ENCODE measurements at regions of chr3 and their contacts with region 1.

Region 1: GRCh38 chr3:150681057-150681456 is 22.7 kb downstream of the ERICH6 start:
- DNase-seq: no peak
- ATAC-seq: no peak
- H3K4me3 ChIP-seq: no peak overlapping the region
- H3K27ac ChIP-seq: no peak overlapping the region
- H3K4me1 ChIP-seq: no peaks in the 10 kb centered on the region
- H3K27me3 ChIP-seq: no peaks in the 10 kb centered on the region; the same call in 1 of the 2 replicates
- CTCF ChIP-seq: no peak

Region 2: DNA sequence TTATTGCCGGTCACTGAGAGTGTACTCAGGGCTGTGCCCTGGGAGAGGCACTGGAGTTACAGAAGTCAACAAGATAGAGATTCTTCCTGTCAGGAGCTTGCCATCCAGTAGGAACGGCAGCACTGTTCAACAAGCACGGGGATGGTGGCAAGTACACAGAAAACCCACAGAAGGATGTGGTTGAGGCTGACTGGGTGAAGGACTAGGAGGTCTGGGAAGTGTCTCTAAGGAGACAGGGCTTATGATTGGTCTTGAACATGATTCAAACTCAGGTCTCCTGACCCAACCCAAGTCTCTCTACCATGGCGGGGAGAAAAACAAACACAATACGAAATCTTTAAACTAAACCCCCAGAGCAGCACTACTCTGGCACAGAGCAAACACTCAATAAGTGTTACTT is 14.9 kb before region 1 on chr3:
- CTCF ChIA-PET with region 1: interaction called, 10 read pairs
- POLR2A ChIA-PET with region 1: no interaction called
- in situ Hi-C with region 1: no loop called
- intact Hi-C with region 1: no loop called
- DNase-seq: no peak
- ATAC-seq: no peak
- H3K4me3 ChIP-seq: no peak overlapping the region
- H3K27ac ChIP-seq: no peak overlapping the region
- H3K4me1 ChIP-seq: no peaks in the 10 kb centered on the region
- H3K27me3 ChIP-seq: peaks cover 12% of the 10 kb centered on the region; the same call in 1 of the 2 replicates
- CTCF ChIP-seq: no peak

Region 3: DNA sequence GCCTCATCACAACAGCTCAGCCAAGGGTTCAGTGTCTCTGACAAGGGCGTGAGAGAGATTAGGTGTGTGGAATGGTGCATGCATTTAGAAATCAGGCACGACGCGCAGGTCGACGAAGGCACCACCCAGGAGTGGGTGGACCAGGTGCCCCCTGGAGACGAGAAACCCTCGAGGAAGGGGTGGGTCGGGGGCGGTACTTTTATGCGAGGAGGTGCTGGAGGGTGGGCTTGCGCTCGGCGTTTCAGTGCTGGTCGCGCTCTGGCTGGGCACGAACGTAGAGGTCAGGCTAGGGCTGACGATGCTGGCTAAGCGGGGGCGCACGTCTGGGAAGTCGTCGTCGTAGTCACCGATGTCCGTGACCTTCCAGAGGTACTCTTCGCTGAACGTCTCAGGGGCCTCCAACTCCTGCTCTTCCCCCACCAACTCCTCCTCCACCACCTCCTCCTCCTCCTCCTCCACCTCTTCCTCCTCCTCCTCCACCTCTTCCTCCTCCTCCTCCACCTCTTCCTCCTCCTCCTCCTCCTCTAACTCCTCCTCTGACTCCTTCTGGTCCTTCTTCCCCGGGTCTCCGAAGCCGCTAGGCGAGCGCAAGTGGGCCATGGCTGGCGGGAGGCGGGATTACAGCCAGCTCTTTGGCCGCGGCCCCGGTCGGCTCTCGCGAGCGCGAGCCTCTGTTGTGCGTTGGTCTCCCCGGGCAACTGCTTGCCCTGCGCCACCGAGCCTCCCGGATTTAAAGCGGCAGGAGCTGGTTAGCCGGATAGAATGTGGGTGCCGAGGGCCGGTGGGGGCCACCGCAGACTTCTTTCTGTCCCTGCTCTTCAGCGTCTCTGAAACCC is 22.5 kb after region 1 on chr3 and contains the start of gene ERICH6:
- CTCF ChIA-PET with region 1: interaction called, 11 read pairs
- POLR2A ChIA-PET with region 1: interaction called, 3 read pairs
- in situ Hi-C with region 1: no loop called
- intact Hi-C with region 1: no loop called
- DNase-seq: peak; percentile 61
- ATAC-seq: peak; percentile 98
- H3K4me3 ChIP-seq: peak within 1 kb of the TSS; percentile 70 to 82
- H3K27ac ChIP-seq: peak within 1 kb of the TSS; percentile 92
- H3K4me1 ChIP-seq: 0 out of 2 replicates have a peak, but pooled peaks cover 6% of the 10 kb centered on the region
- H3K27me3 ChIP-seq: no peaks in the 10 kb centered on the region
- CTCF ChIP-seq: no peak
- total RNA-seq, gene ERICH6: 0.28 TPM

Region 4: DNA sequence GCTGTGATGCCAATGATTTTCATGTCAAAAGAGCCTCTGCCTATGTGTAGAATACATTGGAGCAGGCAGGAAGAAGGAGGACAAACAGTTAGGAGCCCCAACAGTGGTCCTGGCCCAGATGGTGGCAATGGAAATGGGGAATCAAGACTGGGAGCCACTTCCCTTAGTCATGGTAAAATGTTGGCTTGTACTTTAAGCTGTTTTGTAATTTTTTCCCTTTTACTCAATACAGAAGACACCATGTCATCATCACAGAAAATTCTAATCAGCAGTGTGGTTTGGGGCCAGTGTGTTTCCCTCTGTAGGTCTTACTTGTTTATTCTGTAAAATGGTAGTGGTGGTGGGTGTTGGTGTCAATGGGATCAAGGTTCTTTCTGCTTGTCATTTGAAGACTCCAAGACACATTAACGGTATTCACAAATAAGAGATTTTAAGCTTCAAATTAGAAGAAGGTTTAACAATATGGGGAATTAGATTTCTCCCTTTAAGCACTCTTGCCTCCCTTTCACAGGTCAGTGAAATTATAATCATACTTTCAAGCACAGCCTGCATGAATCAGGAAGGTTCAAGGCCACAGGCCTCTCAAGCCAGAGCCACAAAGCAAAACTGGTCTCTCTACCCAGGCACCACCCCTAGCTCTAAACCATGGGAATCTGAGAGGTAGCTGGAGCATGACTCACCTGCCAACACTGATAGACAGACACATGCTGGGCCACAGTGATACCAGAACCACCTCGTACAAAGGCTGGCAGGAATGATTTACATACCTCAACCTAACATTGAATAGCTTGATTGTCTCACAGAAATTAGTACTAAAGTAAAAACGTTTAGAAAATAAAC is 57.0 kb after region 1 on chr3:
- CTCF ChIA-PET with region 1: no interaction called
- POLR2A ChIA-PET with region 1: no interaction called
- in situ Hi-C with region 1: no loop called
- intact Hi-C with region 1: loop called (anchors 10 kb)
- DNase-seq: no peak
- ATAC-seq: no peak
- H3K4me3 ChIP-seq: no peak overlapping the region
- H3K27ac ChIP-seq: no peak overlapping the region
- H3K4me1 ChIP-seq: no peaks in the 10 kb centered on the region
- H3K27me3 ChIP-seq: no peaks in the 10 kb centered on the region
- CTCF ChIP-seq: no peak

Measured in Panc1 (cell line).